CD4-positive, alpha-beta T cell (primary cell): ENCODE measurements at regions of chr13 and their contacts with region 1.

Region 1: DNA sequence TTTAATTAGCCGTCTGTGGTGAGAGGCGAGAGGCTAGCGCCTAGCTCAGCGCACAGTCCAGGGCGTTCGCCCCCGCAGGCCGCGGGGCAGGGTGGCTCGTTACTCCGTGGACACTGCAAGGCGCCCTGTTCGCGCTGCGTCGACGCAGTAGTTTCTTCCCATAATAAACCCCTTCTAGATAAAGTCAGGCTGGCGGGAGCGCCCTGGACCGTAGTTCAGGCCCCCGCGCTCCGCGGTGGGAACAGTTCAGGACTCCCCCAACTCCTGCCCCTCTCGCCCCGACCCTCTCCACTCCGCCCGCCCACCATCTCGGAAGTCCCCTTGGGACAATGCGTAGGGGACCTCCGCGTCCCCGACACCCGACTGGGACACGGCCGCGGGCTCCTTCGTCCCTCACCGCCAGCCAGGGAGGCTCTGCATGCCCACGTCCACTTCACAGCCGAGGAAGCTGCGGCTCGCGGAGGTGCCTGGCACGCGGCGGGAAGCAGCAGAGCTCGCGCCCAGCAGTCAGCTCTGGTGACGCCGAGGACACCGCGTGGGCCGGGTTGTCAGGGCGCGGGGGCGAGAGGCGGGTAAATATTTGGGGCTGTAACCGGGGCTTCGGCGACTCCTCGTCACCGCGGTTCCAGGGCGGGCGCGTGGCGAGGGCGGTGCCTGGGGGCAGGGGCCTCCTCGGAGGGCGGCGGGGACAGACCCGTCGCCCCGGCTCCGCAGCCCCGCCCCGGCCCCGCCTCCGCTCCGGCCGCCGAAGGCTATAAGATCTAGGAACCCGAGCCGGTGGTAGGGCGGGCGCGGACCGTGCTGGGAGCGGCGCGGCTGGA is at the start of gene RGCC:
- DNase-seq: peak; percentile 74 to 99 (median 94)
- ATAC-seq: peak; percentile 72
- H3K4me3 ChIP-seq: peak within 1 kb of the TSS; percentile 92
- H3K4me3 Mint-ChIP-seq: peak within 1 kb of the TSS; percentile 94
- H3K27ac ChIP-seq: peak within 1 kb of the TSS; percentile 92 to 93
- H3K27ac Mint-ChIP-seq: peak within 1 kb of the TSS; percentile 98
- H3K4me1 ChIP-seq: peaks cover 38% of the 10 kb centered on the region
- H3K4me1 Mint-ChIP-seq: peaks cover 46% of the 10 kb centered on the region
- H3K27me3 ChIP-seq: no peaks in the 10 kb centered on the region
- H3K27me3 Mint-ChIP-seq: no peaks in the 10 kb centered on the region
- CTCF ChIP-seq: no peak
- total RNA-seq, gene RGCC: 752 to 758 TPM

Region 2: GRCh38 chr13:41352935-41353840 is 103.8 kb before region 1 on chr13:
- CTCF ChIA-PET with region 1: interaction called, 7 read pairs
- POLR2A ChIA-PET with region 1: interaction called, 27 read pairs
- intact Hi-C with region 1: loop called (anchors 5 kb)
- DNase-seq: peak; percentile 15 to 85 (median 46)
- ATAC-seq: peak; percentile 51
- H3K4me3 ChIP-seq: no peak overlapping the region
- H3K4me3 Mint-ChIP-seq: peak overlapping the region; percentile 44
- H3K27ac ChIP-seq: peak overlapping the region; percentile 25 to 56
- H3K27ac Mint-ChIP-seq: peak overlapping the region; percentile 72
- H3K4me1 ChIP-seq: peaks cover 34% of the 10 kb centered on the region
- H3K4me1 Mint-ChIP-seq: peaks cover 57% of the 10 kb centered on the region
- H3K27me3 ChIP-seq: no peaks in the 10 kb centered on the region
- H3K27me3 Mint-ChIP-seq: no peaks in the 10 kb centered on the region
- CTCF ChIP-seq: peak; percentile 76

Region 3: DNA sequence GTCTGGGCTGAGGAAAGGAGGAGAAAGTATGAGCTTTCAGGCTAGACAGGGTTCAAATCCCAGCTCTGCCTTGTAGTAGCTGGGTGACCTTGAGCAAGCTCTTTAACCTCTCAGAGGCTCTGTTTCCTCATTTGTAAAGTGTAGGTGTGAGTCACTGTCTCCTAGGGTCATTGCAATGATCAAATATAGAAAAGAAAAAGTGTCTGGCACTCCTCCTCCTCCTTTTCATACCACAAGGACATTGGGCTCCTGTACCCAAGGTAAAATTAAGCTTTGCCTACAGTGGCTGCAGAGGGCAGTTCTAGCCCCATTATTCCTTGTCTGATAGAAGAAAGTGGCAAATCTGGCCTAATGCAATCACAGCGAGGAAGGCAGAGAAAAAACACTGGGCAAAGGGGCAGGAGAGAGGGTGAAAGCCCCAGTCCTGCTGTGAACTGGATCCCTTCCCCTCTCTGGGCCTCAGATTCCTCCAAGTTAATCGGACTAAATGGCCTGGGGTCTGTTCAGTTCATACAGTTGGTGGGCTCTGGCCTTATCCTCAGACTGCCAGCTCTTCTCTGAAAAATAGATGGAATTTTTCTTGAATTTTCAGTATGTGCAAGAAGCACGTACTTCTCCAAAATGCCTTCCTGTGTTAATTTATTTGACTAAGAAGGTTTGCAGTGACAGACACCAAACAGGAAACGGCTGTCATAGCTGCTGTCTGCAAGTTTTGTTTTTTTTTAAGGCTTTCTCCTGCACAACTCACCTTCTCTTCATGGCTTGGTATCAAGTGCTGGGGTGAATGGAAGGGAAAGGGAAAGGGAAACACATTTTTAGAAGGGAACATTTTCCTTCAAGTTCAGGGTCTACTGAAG is 35.7 kb after region 1 on chr13:
- CTCF ChIA-PET with region 1: interaction called, 49 read pairs
- POLR2A ChIA-PET with region 1: interaction called, 61 read pairs
- intact Hi-C with region 1: loop called (anchors 1 to 5 kb)
- DNase-seq: peak in 9 of 14 experiments; percentile 17 to 79 (median 32)
- ATAC-seq: peak; percentile 80
- H3K4me3 ChIP-seq: peak overlapping the region; percentile 6
- H3K4me3 Mint-ChIP-seq: peak overlapping the region; percentile 81
- H3K27ac ChIP-seq: peak overlapping the region; percentile 86 to 94
- H3K27ac Mint-ChIP-seq: peak overlapping the region; percentile 100
- H3K4me1 ChIP-seq: peaks cover 66% of the 10 kb centered on the region
- H3K4me1 Mint-ChIP-seq: peaks cover 91% of the 10 kb centered on the region
- H3K27me3 ChIP-seq: no peaks in the 10 kb centered on the region
- H3K27me3 Mint-ChIP-seq: no peaks in the 10 kb centered on the region
- CTCF ChIP-seq: no peak

Region 4: DNA sequence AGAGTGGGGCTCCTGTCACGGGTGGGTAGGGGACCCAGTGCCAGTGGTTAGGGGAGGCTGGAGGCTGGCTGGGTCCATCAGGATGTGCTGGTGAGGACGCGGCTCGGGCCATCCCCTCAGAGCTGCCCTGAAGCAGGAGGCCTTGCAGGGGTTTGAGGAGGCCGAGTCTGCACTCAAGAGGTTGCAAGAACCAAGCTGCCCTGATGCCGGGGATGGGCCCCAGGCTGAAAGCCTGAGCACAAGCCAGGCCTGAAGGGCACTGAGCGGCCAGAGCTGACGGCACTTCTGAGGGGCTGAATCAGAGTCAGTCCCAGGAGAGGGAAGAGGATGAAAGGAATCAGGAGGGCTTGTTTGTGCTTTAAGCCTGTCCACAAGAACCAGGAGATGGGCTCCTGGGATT is 93.3 kb after region 1 on chr13:
- CTCF ChIA-PET with region 1: no interaction called
- POLR2A ChIA-PET with region 1: no interaction called
- intact Hi-C with region 1: no loop called
- DNase-seq: no peak
- ATAC-seq: no peak
- H3K4me3 ChIP-seq: no peak overlapping the region
- H3K4me3 Mint-ChIP-seq: no peak overlapping the region
- H3K27ac ChIP-seq: no peak overlapping the region
- H3K27ac Mint-ChIP-seq: no peak overlapping the region
- H3K4me1 ChIP-seq: peaks cover 6% of the 10 kb centered on the region
- H3K4me1 Mint-ChIP-seq: peaks cover 3% of the 10 kb centered on the region
- H3K27me3 ChIP-seq: no peaks in the 10 kb centered on the region
- H3K27me3 Mint-ChIP-seq: no peaks in the 10 kb centered on the region
- CTCF ChIP-seq: no peak